Heart right ventricle (tissue), 16 donors: ENCODE measurements at regions of chr16 and their contacts with region 1.

Region 1: DNA sequence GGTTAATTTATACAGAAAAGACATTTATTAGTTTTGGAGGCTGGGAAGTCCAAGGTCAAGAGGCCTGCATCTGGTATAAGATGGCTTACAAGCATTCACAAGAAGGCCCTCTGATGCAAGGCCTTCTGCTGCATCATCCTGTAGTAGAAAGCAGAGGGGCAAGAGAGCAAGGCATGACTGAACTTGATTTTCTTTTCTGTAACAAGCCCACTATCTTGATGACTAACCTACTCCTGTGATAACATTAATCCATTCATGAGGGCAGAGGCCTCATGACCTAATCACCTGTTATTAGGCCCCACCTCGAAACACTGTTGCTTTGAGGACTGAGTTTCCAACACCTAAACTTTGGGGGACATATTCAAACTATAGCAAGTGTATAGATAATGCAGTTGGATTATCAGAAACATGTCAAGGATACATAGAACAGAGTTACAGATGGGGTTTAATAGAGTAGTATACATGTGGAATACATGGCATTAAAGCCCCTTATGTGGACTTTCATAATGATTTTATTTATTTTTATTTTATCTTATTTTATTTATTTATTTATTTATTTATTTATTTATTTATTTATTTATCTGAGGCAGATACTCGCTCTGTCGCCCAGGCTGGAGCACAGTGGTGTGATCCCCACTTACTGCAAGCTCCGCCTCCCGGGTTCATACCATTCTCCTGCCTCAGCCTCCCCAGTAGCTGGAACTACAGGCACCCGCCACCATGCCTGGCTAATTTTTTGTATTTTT is 88.2 kb downstream of the CHD9 start:
- DNase-seq: no peak
- ATAC-seq: no peak
- H3K4me3 ChIP-seq: no peak overlapping the region
- H3K27ac ChIP-seq: no peak overlapping the region
- H3K4me1 ChIP-seq: peaks cover 0 to 17% (median 0%) of the 10 kb centered on the region in 9 donors
- H3K27me3 ChIP-seq: no peaks in the 10 kb centered on the region
- CTCF ChIP-seq: no peak

Region 2: DNA sequence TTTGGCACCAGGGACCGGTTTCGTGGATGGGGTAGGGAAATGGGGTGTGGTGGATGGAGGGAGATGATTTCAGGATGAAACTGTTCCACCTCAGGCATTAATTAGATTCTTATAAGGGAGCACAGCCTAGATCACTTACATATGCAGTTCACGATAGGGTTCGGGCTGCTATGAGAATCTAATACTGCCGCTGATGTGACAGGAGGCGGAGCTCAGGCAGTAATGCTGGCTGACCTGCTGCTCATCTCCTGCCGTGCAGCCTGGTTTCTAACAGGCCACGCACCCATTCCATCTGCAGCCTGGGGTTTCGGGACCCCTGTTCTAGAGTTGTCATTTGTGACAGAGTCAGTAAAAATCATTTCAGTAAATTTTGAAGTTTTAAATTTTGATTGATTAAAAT is 11.5 kb after region 1 on chr16:
- intact Hi-C with region 1: loop called in 1 of 10 experiments (anchors 2 kb)
- DNase-seq: no peak
- ATAC-seq: peak in 3 of 8 donors; percentile 34 to 62 (median 49)
- H3K4me3 ChIP-seq: no peak overlapping the region
- H3K27ac ChIP-seq: no peak overlapping the region
- H3K4me1 ChIP-seq: peaks cover 0 to 39% (median 17%) of the 10 kb centered on the region in 9 donors
- H3K27me3 ChIP-seq: no peaks in the 10 kb centered on the region
- CTCF ChIP-seq: no peak

Region 3: GRCh38 chr16:53415504-53415903 is 272.5 kb after region 1 on chr16:
- intact Hi-C with region 1: no loop called
- DNase-seq: no peak
- ATAC-seq: no peak
- H3K4me3 ChIP-seq: no peak overlapping the region
- H3K27ac ChIP-seq: no peak overlapping the region
- H3K4me1 ChIP-seq: no peaks in the 10 kb centered on the region
- H3K27me3 ChIP-seq: peaks cover 0 to 7% (median 4%) of the 10 kb centered on the region in 7 donors
- CTCF ChIP-seq: no peak